WTC11 (cell line): ENCODE measurements at regions of chr5 and their contacts with region 1.

Region 1: GRCh38 chr5:160342403-160342941 is 28.0 kb downstream of the C1QTNF2 start:
- DNase-seq: no peak
- ATAC-seq: no peak
- H3K4me3 Mint-ChIP-seq: no peak overlapping the region
- H3K27ac Mint-ChIP-seq: no peak overlapping the region
- H3K4me1 Mint-ChIP-seq: peaks cover 28% of the 10 kb centered on the region
- H3K27me3 Mint-ChIP-seq: no peaks in the 10 kb centered on the region
- CTCF ChIP-seq: no peak

Region 2: GRCh38 chr5:160081495-160081894 is 261.0 kb before region 1 on chr5:
- CTCF ChIA-PET with region 1: interaction called, 30 read pairs
- POLR2A ChIA-PET with region 1: interaction called, 9 read pairs
- DNase-seq: no peak
- ATAC-seq: no peak
- H3K4me3 Mint-ChIP-seq: no peak overlapping the region
- H3K27ac Mint-ChIP-seq: 0 out of 2 replicates have a peak overlapping the region, but pooled peaks have one; percentile 32
- H3K4me1 Mint-ChIP-seq: peaks cover 29% of the 10 kb centered on the region
- H3K27me3 Mint-ChIP-seq: no peaks in the 10 kb centered on the region; the same call in 1 of the 2 replicates
- CTCF ChIP-seq: no peak

Region 3: GRCh38 chr5:160199410-160199911 is 143.0 kb before region 1 on chr5:
- CTCF ChIA-PET with region 1: interaction called, 52 read pairs
- POLR2A ChIA-PET with region 1: no interaction called
- DNase-seq: peak; percentile 72
- ATAC-seq: peak; percentile 79
- H3K4me3 Mint-ChIP-seq: peak overlapping the region; percentile 69
- H3K27ac Mint-ChIP-seq: no peak overlapping the region
- H3K4me1 Mint-ChIP-seq: peaks cover 41% of the 10 kb centered on the region
- H3K27me3 Mint-ChIP-seq: peaks cover 4% of the 10 kb centered on the region; the same call in 1 of the 2 replicates
- CTCF ChIP-seq: peak; percentile 92

Region 4: DNA sequence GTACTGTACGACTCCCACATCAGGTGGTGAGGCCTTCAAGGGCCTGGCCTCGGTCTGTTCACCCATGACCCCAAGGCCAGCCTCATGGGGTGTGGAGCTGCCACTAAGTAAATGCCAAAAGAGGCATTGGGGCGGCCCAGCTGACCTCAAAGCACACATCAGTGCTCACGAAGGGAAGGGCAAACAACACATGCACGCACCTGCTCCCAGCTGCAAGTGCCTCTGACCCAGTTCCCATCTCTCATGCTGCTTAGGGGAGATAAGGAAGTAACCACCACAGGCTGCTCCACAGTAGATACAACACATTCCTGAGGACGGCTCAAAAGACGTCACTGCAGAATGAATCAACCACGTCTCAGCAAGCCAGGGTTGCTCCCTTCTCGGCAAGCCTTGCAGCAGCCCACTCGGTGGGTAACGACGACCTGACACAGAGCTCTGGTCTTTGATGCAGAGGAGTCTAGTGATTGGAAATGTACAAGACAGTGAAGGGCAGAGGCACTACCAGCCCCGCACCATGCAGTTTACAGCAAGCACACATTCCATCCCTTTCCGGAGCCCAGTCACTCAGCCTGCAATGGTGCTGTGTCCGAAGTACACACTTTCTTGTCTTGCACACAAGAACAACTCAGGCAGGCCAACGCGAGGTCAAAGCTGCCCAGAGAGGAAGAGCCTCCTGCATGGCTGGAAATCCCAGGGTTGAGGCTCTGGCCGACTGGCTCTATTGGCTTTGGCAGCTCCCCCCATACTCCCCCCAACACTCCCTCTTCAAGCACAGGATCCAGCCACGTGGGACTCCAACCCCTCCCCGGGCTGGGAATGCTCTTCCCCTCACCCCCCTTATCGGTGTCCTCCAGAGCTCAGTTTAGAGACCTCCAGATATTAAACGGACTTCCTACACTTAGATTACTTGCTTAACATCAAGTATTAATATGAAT is 81.3 kb before region 1 on chr5:
- CTCF ChIA-PET with region 1: interaction called, 40 read pairs
- POLR2A ChIA-PET with region 1: interaction called, 3 read pairs
- DNase-seq: no peak
- ATAC-seq: peak; percentile 11
- H3K4me3 Mint-ChIP-seq: no peak overlapping the region
- H3K27ac Mint-ChIP-seq: peak overlapping the region; percentile 72
- H3K4me1 Mint-ChIP-seq: peaks cover 50% of the 10 kb centered on the region
- H3K27me3 Mint-ChIP-seq: no peaks in the 10 kb centered on the region; the same call in 1 of the 2 replicates
- CTCF ChIP-seq: no peak

Region 5: DNA sequence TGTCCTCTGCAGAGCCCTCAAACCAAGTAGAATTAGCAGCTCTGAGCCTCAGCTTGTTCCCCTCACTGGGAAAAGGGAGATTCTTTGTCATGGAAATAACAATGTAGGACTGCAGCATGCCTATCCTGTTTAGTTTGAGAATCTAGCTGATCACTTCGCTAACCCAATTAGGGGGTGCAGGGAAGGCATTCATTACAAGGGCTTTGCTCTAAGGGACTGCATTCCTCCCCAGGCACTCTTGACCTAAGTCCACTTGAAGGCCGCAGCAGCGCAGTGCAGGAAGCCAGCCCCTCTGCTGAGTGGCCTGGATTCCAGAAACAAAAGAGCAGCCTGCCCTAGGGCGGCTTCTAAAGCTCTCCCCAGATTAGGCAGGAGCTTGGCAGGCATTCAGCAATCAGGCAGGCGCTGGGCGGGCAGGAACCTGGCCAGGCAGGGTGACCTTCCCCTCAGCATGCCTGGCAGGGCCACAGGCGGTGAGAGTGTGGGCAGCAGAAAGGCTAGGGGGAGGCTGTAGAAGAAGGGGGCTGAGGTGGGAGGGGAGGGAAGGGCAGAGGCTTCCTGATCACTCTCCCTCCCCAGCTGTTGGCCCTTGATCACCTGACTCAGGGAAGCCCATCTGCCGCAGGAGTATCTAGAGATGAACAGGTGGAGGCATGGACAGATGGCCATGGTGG is 55.0 kb before region 1 on chr5:
- CTCF ChIA-PET with region 1: interaction called, 18 read pairs
- POLR2A ChIA-PET with region 1: interaction called, 7 read pairs
- DNase-seq: peak; percentile 86
- ATAC-seq: peak; percentile 92
- H3K4me3 Mint-ChIP-seq: peak overlapping the region; percentile 60
- H3K27ac Mint-ChIP-seq: peak overlapping the region; percentile 99
- H3K4me1 Mint-ChIP-seq: peaks cover 59% of the 10 kb centered on the region
- H3K27me3 Mint-ChIP-seq: no peaks in the 10 kb centered on the region
- CTCF ChIP-seq: no peak

Region 6: DNA sequence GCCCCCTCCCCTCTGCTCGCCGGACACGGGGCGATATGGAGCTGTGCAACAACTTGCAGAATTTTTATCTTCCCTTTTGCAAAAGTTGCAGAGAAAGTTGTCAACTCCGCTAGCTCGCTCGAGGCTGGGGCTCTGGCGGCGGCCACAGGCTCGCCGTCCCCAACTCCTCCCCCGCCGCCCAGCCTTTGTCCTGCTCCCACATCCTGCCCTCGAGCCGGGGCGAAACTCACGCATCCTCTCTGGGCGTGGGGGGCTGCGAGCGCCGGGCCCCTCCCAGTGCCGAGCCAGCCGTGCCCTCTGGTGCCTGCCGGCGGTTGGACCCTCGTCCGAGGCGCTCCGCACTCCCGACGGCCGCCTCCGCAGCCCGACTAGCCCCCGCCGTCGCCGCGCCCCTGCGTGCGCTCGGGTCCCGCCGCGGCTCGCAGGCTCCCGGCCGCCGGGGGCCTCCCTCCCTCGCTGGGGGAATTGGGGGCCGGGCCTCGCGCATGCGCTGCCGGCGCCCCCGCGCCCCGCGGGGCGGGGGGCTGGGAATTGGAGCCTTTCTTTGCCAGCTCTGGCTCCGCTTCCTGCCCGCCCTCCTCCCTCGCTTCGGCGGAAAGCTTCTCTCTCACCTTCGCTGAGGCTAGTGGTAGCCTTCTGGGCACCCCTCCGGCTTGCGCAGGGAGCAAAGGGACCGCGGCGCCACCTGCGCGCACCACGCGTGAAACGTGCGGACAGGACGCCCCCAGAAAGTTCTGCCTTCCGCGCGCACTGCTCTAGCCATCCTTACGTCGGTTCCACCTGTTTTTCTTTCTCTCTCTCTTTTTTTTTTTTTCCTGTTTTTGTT is 30.1 kb before region 1 on chr5 and contains the start of gene CCNJL:
- CTCF ChIA-PET with region 1: interaction called, 12 read pairs
- POLR2A ChIA-PET with region 1: interaction called, 9 read pairs
- DNase-seq: peak; percentile 88
- ATAC-seq: peak; percentile 82
- H3K4me3 Mint-ChIP-seq: peak within 1 kb of the TSS; percentile 90
- H3K27ac Mint-ChIP-seq: peak within 1 kb of the TSS; percentile 85
- H3K4me1 Mint-ChIP-seq: peaks cover 47% of the 10 kb centered on the region
- H3K27me3 Mint-ChIP-seq: no peaks in the 10 kb centered on the region; the same call in 1 of the 2 replicates
- CTCF ChIP-seq: no peak
- total RNA-seq, gene CCNJL: 27.9 to 31.3 TPM (median 28.6 TPM) in 3 replicates

Region 7: GRCh38 chr5:160390787-160391696 is 48.6 kb after region 1 on chr5:
- CTCF ChIA-PET with region 1: interaction called, 15 read pairs
- POLR2A ChIA-PET with region 1: interaction called, 4 read pairs
- DNase-seq: no peak
- ATAC-seq: no peak
- H3K4me3 Mint-ChIP-seq: no peak overlapping the region
- H3K27ac Mint-ChIP-seq: 0 out of 2 replicates have a peak overlapping the region, but pooled peaks have one; percentile 36
- H3K4me1 Mint-ChIP-seq: no peaks in the 10 kb centered on the region
- H3K27me3 Mint-ChIP-seq: peaks cover 9% of the 10 kb centered on the region
- CTCF ChIP-seq: no peak